ENCODE measurements at regions of chr4 and their contacts with region 1.

Region 1: GRCh38 chr4:56907489-56908205 is at the start of gene REST:
- DNase-seq: peak; percentile 55
- H3K4me3 ChIP-seq: peak within 1 kb of the TSS; percentile 68 to 92 (median 90)
- H3K27ac ChIP-seq: peak within 1 kb of the TSS; percentile 63
- H3K4me1 ChIP-seq: peaks cover 15% of the 10 kb centered on the region
- H3K27me3 ChIP-seq: peaks cover 2% of the 10 kb centered on the region
- CTCF ChIP-seq: no peak
- total RNA-seq, gene REST: 45.6 to 52.2 TPM

Region 2: DNA sequence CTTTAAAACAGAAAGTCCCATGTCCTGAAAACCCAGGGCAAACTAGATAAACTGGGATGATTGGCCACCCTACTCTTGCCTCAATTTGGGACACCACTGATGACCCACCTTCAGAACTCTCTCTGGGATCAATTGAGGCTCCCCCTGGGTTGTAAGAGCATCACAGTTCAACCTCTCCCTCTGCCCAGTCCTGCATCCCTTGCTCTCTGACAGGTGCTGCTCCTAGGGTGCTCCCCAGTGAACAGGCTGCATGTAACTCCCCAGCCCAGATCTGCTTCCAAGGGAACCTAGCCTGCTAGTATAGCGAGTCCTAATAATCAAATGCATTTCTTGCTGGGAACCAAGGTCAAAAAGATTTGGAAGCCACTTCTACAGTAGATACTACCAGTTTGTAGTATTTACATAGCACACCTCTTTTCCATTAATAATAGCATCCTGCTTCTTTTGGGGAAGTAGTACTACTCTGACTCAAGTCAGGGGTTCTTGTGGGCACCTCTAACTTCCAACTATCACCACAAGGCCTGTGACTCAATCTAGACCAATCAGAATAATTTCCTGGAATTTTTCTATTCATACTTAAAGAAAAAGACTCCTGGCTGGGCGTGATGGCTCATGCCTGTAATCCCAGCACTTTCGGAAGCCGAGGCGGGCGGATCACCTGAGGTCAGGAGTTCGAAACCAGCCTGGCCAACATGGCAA is 44.1 kb before region 1 on chr4:
- CTCF ChIA-PET with region 1: no interaction called
- dilution Hi-C with region 1: no loop called
- in situ Hi-C with region 1: no loop called
- intact Hi-C with region 1: no loop called
- DNase-seq: peak; percentile 48
- H3K4me3 ChIP-seq: no peak overlapping the region
- H3K27ac ChIP-seq: no peak overlapping the region
- H3K4me1 ChIP-seq: no peaks in the 10 kb centered on the region
- H3K27me3 ChIP-seq: no peaks in the 10 kb centered on the region
- CTCF ChIP-seq: no peak

Region 3: GRCh38 chr4:56937262-56937661 is 29.6 kb after region 1 on chr4:
- CTCF ChIA-PET with region 1: no interaction called
- dilution Hi-C with region 1: no loop called
- in situ Hi-C with region 1: no loop called
- intact Hi-C with region 1: loop called (anchors 2 kb)
- DNase-seq: peak; percentile 84
- H3K4me3 ChIP-seq: no peak overlapping the region
- H3K27ac ChIP-seq: no peak overlapping the region
- H3K4me1 ChIP-seq: peaks cover 14% of the 10 kb centered on the region
- H3K27me3 ChIP-seq: no peaks in the 10 kb centered on the region
- CTCF ChIP-seq: no peak

Region 4: DNA sequence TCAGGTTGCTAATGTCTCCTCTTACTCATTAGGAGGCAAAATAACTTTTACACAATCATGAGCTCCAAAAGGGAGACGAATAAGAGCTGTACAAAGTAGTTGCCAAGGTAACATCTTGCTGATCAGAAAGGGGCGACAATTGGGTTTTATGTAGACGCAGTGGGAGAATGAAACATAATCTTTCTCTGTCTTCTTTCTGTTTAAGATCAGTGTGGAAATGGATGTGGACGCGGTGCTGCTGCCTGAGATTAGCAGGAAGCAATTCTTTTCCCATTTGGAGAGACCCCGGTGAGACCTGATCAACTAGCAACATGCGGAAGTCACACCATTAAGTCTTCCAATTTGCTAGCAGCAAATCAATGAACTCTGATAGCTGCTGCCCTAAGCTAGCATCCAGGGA is 293.3 kb after region 1 on chr4:
- CTCF ChIA-PET with region 1: no interaction called
- dilution Hi-C with region 1: no loop called
- in situ Hi-C with region 1: no loop called
- intact Hi-C with region 1: no loop called
- DNase-seq: no peak
- H3K4me3 ChIP-seq: no peak overlapping the region
- H3K27ac ChIP-seq: no peak overlapping the region
- H3K4me1 ChIP-seq: no peaks in the 10 kb centered on the region
- H3K27me3 ChIP-seq: no peaks in the 10 kb centered on the region
- CTCF ChIP-seq: no peak

Measured in mammary epithelial cell (primary cell).